A673 (cell line): ENCODE measurements at regions of chr10 and their contacts with region 1.

Region 1: GRCh38 chr10:119750391-119751230 is 24.8 kb downstream of the INPP5F start:
- DNase-seq: peak; percentile 85
- H3K4me3 ChIP-seq: no peak overlapping the region
- H3K27ac ChIP-seq: no peak overlapping the region
- H3K4me1 ChIP-seq: peaks cover 20% of the 10 kb centered on the region
- H3K27me3 ChIP-seq: no peaks in the 10 kb centered on the region
- CTCF ChIP-seq: peak; percentile 94

Region 2: GRCh38 chr10:119715628-119716505 is 34.7 kb before region 1 on chr10:
- CTCF ChIA-PET with region 1: no interaction called
- POLR2A ChIA-PET with region 1: no interaction called
- intact Hi-C with region 1: no loop called
- DNase-seq: no peak
- H3K4me3 ChIP-seq: no peak overlapping the region
- H3K27ac ChIP-seq: no peak overlapping the region
- H3K4me1 ChIP-seq: no peaks in the 10 kb centered on the region
- H3K27me3 ChIP-seq: no peaks in the 10 kb centered on the region
- CTCF ChIP-seq: no peak

Region 3: GRCh38 chr10:119725828-119726675 is 24.6 kb before region 1 on chr10 and contains the start of gene INPP5F:
- CTCF ChIA-PET with region 1: interaction called, 13 read pairs
- POLR2A ChIA-PET with region 1: no interaction called
- intact Hi-C with region 1: no loop called
- DNase-seq: peak; percentile 99
- H3K4me3 ChIP-seq: peak within 1 kb of the TSS; percentile 97
- H3K27ac ChIP-seq: peak within 1 kb of the TSS; percentile 87
- H3K4me1 ChIP-seq: peaks cover 17% of the 10 kb centered on the region
- H3K27me3 ChIP-seq: no peaks in the 10 kb centered on the region
- CTCF ChIP-seq: no peak
- total RNA-seq, gene INPP5F: 20.0 and 22.0 TPM in 2 replicates

Region 4: GRCh38 chr10:119821182-119821581 is 70.6 kb after region 1 on chr10:
- CTCF ChIA-PET with region 1: no interaction called
- POLR2A ChIA-PET with region 1: no interaction called
- intact Hi-C with region 1: loop called (anchors 5 kb)
- DNase-seq: no peak
- H3K4me3 ChIP-seq: no peak overlapping the region
- H3K27ac ChIP-seq: no peak overlapping the region
- H3K4me1 ChIP-seq: no peaks in the 10 kb centered on the region
- H3K27me3 ChIP-seq: no peaks in the 10 kb centered on the region
- CTCF ChIP-seq: no peak

Region 5: DNA sequence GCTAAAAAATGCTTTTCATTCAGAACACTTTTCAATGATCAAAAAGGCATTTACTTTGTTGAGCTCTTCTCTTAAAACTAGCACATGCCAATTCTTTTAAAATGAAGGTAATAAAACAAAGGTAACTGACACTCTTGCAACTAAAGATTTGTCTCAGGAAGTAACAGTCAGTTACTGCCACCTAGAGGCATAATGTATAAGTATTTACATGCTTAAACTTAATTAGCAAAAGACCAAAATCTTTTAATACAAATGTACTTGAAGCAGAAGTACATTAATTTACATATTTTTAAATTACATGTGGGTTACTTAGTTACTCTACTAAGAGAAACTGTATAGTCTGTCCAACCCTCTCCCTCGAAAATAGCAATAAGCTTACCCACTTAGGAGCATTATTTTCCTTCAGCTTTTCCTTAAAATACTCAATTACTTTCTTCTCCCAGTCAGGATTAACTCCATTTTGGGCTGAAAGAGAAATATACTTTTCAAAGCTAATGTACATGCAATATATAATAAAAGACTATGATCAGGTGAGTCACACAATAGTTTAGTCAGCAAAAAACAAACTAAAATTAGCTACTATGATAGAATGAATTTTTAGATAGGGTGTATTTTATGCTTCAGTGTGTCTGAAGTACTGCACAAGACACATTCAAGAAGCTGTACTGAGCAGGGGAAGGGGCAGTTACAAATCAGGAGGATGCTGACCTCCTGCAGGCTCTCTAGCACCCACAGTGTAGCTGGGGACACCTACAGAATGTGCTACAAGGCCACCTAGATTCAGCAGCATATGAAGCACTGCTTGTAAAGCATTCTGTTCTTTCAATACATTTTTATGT is 109.0 kb after region 1 on chr10:
- CTCF ChIA-PET with region 1: interaction called, 13 read pairs
- POLR2A ChIA-PET with region 1: no interaction called
- intact Hi-C with region 1: loop called (anchors 5 kb)
- DNase-seq: peak; percentile 53
- H3K4me3 ChIP-seq: no peak overlapping the region
- H3K27ac ChIP-seq: no peak overlapping the region
- H3K4me1 ChIP-seq: peaks cover 11% of the 10 kb centered on the region
- H3K27me3 ChIP-seq: no peaks in the 10 kb centered on the region
- CTCF ChIP-seq: peak; percentile 72

Region 6: DNA sequence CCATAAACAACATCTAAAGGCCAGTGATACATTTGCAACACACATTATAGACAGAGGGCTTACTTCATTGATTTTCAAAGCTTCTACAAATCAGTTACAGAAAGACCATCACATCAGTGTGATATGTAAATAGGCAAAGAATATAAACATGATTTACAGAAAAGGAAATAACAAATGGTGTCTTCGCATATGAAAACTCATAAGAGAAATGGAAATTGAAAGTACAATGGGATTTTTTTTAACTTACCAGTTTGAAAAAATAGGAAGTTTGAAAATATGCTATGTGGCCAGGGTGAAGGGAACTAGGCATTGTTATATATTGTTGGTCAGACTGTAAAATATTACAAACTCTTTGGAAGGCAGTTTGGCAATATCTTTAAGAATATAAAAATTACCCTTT is 169.2 kb after region 1 on chr10:
- CTCF ChIA-PET with region 1: no interaction called
- POLR2A ChIA-PET with region 1: no interaction called
- intact Hi-C with region 1: loop called (anchors 5 kb)
- DNase-seq: no peak
- H3K4me3 ChIP-seq: no peak overlapping the region
- H3K27ac ChIP-seq: no peak overlapping the region
- H3K4me1 ChIP-seq: no peaks in the 10 kb centered on the region
- H3K27me3 ChIP-seq: no peaks in the 10 kb centered on the region
- CTCF ChIP-seq: no peak